Cardiac septum (tissue), 1 donor: ENCODE measurements at regions of chr19 and their contacts with region 1.

Region 1: DNA sequence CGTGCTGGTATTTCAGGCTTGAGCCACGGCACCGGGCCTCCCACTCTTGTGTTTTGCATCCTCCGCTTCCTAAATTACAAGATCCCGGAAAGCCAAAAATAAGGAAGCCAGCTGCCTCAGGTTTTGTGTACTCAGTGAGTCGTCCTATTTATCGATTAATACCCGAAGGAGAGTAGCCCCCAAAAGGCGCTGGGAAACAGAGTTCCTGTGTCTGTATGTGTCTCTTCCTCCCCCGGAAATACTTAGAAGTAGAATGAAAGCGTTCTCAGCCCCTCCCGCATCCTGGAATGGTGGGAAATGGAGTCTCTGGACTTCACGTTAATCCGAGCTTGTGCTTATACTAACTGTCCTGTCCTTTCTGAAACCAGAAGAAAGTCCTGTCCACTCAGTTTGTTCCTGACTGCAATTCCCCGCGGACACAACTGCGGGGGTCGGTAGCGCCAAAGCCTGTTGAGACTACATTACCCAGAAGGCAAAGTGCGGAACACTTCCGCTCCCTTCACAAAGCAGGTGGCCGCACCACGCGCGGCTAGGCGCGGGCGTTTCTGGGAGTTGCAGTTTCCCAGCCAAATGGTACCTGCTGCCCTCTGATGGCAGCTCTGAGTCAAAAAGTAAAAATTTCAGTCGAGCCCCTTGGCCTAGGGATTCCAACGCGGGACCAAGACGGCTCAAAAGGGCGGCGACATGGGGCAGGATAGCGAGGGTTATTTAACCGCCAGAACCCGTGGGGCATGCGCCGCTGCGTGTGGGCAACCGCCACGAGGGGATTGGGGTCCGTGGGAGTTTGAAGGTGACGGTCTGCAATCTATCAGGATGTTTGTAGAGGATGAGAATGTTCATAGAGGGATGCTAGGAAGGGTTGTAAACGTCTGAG is 2.2 kb upstream of the GSK3A start:
- DNase-seq: peak; percentile 98

Region 2: DNA sequence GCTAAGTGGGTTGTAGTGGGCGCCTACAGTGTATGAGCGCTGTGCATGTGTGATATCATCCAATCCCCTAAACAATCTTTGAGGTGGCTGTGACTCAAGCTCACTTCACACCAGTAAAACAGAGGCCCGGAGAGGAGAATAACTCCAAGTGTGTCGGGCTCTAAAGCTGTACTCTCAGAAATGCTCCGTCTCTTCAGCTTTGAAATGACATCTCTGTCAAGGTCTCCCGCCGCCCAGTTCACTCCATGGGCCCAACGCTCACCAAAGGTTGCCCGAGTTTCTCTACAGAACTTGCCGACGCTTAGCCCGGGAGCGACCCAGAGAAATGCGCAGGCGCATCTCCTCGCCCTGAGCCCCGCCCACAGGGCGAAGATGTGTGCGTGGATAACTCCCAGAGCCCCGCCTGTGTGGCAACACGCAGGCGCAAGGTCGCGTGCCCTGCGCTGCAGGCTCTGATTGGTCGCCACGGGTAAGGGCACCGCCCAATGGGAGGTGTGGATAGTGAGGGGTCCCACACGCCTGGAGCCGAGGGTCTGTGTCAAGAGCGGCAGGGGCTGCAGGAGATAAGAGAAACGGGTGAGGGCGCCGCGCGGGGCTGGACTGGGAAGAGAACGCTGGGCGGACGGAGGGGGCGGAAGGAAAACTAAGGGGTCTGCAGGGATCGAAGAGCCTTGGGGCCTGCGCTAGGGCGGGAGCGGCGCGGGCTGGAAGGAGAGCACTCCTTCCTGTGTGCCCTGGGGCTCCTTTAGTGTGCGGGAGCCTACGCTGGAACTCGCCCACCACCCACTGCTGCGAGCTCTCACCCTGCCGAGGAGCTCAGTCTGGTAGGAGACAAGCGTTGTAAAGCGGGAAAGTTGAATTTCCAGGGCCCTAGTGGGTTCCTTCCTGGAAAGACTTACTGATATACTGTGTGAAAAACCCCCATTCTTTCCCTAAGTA is 24.5 kb before region 1 on chr19 and contains the start of gene ZNF526:
- intact Hi-C with region 1: loop called (anchors 2 kb)
- DNase-seq: peak; percentile 99
- total RNA-seq, gene ZNF526: 4.1 TPM

Region 3: GRCh38 chr19:42283143-42284065 is 38.8 kb after region 1 on chr19:
- intact Hi-C with region 1: loop called (anchors 1 kb)
- DNase-seq: peak; percentile 98

Region 4: DNA sequence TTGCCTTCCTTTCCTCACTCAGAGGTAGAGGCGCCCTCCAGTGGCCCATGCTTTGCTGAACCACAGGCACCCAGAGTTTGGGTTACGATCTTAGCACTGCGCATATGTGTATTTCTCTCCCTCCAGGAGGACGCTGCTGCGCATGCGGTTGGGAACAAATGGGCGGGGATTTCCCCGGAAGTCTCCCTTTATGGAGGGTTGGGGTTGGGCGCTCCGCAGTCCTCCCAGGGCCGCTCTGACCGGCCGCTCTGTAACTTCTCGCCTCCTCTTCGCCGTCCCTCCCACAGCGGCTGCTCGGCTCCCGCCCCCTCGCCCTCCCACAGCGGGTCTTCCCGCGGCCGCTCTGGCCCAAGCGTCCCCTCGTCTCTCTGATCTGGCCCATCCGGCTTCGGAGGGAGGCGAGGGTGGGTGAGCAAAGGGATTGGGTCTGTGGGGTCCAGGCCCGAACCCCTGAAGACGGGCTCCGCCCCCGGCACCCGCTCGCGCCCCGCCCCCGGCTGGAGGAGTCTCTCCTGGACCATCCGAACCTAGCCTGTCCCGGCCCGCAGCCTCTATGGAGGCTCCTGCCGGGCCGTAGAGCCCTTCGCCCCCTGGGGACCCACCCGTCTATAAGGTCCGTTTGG is 80.8 kb after region 1 on chr19 and contains the start of gene MEGF8:
- intact Hi-C with region 1: loop called (anchors 2 kb)
- DNase-seq: peak; percentile 99
- total RNA-seq, gene MEGF8: 45.8 TPM

Region 5: GRCh38 chr19:42363614-42364346 is 119.2 kb after region 1 on chr19:
- intact Hi-C with region 1: no loop called
- DNase-seq: no peak

Region 6: GRCh38 chr19:42423462-42424344 is 179.1 kb after region 1 on chr19:
- intact Hi-C with region 1: loop called (anchors 10 kb)
- DNase-seq: peak; percentile 95